ENCODE measurements at regions of chrX and their contacts with region 1.

Region 1: GRCh38 chrX:35439692-35440091 is 358.4 kb upstream of the MAGEB16 start:
- DNase-seq: no peak
- ATAC-seq: no peak
- H3K4me3 ChIP-seq: no peak overlapping the region
- H3K27ac ChIP-seq: no peak overlapping the region
- H3K4me1 ChIP-seq: no peaks in the 10 kb centered on the region
- H3K27me3 ChIP-seq: no peaks in the 10 kb centered on the region
- CTCF ChIP-seq: no peak

Region 2: GRCh38 chrX:34915463-34916225 is 524.0 kb before region 1 on chrX:
- intact Hi-C with region 1: no loop called
- DNase-seq: no peak
- ATAC-seq: peak in 2 of 8 donors; percentile 57 to 76
- H3K4me3 ChIP-seq: no peak overlapping the region
- H3K27ac ChIP-seq: no peak overlapping the region
- H3K4me1 ChIP-seq: peaks cover 0 to 5% (median 0%) of the 10 kb centered on the region in 9 donors
- H3K27me3 ChIP-seq: peaks cover 0 to 9% (median 0%) of the 10 kb centered on the region in 7 donors
- CTCF ChIP-seq: no peak

Region 3: GRCh38 chrX:35046660-35047296 is 392.9 kb before region 1 on chrX:
- intact Hi-C with region 1: no loop called
- DNase-seq: no peak
- ATAC-seq: no peak
- H3K4me3 ChIP-seq: no peak overlapping the region
- H3K27ac ChIP-seq: no peak overlapping the region
- H3K4me1 ChIP-seq: no peaks in the 10 kb centered on the region
- H3K27me3 ChIP-seq: no peaks in the 10 kb centered on the region
- CTCF ChIP-seq: no peak

Region 4: GRCh38 chrX:35166023-35166422 is 273.7 kb before region 1 on chrX:
- intact Hi-C with region 1: no loop called
- DNase-seq: no peak
- ATAC-seq: no peak
- H3K4me3 ChIP-seq: no peak overlapping the region
- H3K27ac ChIP-seq: no peak overlapping the region
- H3K4me1 ChIP-seq: no peaks in the 10 kb centered on the region
- H3K27me3 ChIP-seq: no peaks in the 10 kb centered on the region
- CTCF ChIP-seq: no peak

Region 5: GRCh38 chrX:35374116-35374515 is 65.6 kb before region 1 on chrX:
- intact Hi-C with region 1: loop called in 1 of 10 experiments (anchors 10 kb)
- DNase-seq: no peak
- ATAC-seq: no peak
- H3K4me3 ChIP-seq: no peak overlapping the region
- H3K27ac ChIP-seq: no peak overlapping the region
- H3K4me1 ChIP-seq: no peaks in the 10 kb centered on the region
- H3K27me3 ChIP-seq: peaks cover 0 to 7% (median 0%) of the 10 kb centered on the region in 7 donors
- CTCF ChIP-seq: no peak

Measured in heart right ventricle (tissue), 16 donors.